ENCODE measurements at regions of chr11 and their contacts with region 1.

Region 1: DNA sequence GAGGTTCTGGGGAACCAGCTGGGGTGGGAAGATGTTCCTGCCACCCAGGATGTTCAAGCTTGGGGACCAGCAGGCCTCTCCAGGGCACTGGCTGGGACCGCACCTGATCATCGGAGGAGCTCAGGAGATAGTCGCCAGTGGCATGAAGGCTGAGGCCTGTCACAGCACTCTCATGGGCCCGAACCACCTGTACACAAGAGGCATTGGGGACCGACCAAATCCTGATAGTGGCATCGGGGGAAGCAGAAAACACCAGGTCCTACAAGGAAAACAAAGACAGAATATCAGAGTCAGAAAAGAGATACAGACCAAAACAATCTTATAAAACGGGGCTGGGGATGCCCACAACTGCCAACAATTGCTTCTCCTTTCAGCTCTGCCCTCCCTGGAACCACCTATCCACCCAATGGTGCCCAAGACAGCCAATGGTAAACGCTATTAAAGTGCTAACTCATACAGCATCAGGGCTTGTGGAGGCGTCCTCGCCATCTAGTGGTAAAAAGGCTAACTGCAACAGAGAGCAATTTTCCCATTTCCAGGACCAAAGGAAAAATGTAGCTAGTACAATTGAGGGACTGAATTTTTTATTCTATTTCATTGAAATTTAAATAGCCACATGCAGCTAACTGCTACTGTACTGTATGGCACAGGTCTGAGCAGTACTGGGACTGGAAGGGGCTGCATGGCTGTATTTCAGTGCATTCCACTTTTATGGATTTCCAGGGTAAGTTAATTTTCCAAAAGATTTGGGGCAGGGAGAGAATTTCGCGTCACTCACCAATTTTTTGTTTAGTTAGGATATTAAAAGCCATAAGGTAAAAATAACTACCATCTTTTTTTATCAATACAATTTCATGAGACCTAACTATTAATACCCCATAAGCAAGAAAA is 7.1 kb downstream of the PRPF19 start:
- DNase-seq: peak; percentile 53 to 61
- H3K4me3 ChIP-seq: no peak overlapping the region
- H3K27ac ChIP-seq: peak overlapping the region; percentile 12; the same call in 1 of the 2 replicates
- H3K4me1 ChIP-seq: peaks cover 5% of the 10 kb centered on the region
- H3K27me3 ChIP-seq: no peaks in the 10 kb centered on the region
- CTCF ChIP-seq: peak; percentile 98

Region 2: DNA sequence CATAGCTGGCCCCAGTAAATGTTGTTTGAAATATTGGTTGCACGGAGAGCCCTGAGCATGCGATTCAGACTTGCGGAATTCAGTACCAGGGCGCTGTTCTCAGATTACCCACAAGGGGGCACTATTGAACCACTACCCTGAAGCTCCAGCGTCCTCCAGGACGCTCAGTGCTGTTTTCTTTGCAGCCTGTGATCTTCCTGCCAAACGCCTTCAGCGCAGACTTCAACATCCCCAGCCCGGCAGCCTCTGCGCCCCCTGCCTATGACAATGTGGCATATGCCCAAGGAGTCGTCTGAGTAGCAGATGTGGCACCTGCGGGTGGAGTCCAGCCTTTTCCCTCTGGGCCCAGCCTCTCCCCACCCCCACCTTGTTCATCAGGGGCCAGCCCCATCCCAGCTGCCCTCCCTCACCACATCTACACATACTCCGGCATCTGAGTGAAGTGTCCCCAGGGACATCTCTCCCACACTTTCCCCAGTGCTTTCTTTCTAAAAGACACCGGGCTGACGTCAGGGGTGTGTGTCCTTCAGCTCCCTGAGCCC is 123.8 kb before region 1 on chr11:
- CTCF ChIA-PET with region 1: no interaction called
- POLR2A ChIA-PET with region 1: no interaction called
- intact Hi-C with region 1: loop called (anchors 1 kb)
- DNase-seq: peak; percentile 70 to 87
- H3K4me3 ChIP-seq: no peak overlapping the region
- H3K27ac ChIP-seq: no peak overlapping the region
- H3K4me1 ChIP-seq: no peaks in the 10 kb centered on the region
- H3K27me3 ChIP-seq: peaks cover 43% of the 10 kb centered on the region
- CTCF ChIP-seq: peak; percentile 90

Region 3: DNA sequence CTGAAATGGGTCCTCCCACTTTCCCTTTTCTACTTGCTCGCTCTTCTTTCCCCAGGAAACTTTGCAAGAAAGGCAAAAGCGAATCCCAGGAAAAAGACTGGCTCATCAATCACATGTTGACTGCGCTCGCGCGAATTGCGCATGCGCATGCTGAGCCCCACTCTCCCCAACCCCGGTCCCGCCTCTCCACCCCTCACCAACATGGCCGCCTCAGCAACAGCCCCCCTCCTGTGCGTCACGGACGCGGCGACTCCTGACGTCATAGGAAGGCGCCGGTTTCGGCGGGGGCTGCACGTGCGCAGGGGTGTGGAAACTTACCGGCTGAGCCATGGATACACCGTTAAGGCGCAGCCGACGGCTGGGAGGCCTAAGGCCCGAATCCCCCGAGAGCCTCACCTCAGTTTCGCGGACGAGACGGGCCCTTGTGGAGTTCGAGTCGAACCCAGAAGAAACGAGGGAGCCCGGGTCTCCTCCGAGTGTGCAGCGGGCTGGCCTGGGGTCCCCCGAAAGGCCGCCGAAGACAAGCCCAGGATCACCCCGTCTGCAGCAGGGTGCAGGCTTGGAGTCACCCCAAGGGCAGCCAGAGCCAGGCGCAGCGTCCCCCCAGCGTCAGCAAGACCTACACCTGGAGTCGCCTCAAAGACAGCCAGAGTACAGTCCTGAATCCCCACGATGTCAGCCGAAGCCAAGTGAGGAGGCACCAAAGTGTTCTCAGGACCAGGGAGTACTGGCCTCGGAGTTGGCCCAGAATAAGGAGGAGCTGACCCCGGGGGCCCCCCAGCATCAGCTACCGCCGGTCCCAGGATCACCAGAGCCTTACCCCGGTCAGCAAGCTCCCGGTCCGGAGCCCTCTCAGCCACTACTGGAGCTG is 57.3 kb before region 1 on chr11 and contains the start of gene CCDC86:
- CTCF ChIA-PET with region 1: interaction called, 14 read pairs
- POLR2A ChIA-PET with region 1: no interaction called
- intact Hi-C with region 1: no loop called
- DNase-seq: peak; percentile 83 to 96
- H3K4me3 ChIP-seq: peak within 1 kb of the TSS; percentile 91
- H3K27ac ChIP-seq: peak within 1 kb of the TSS; percentile 52
- H3K4me1 ChIP-seq: peaks cover 18% of the 10 kb centered on the region
- H3K27me3 ChIP-seq: no peaks in the 10 kb centered on the region
- CTCF ChIP-seq: no peak
- total RNA-seq, gene CCDC86: 34.8 and 35.6 TPM in 2 replicates

Region 4: GRCh38 chr11:60913793-60914632 is 14.7 kb after region 1 on chr11 and contains the start of gene TMEM109:
- CTCF ChIA-PET with region 1: interaction called, 10 read pairs
- POLR2A ChIA-PET with region 1: no interaction called
- intact Hi-C with region 1: no loop called
- DNase-seq: peak; percentile 81 to 88
- H3K4me3 ChIP-seq: peak within 1 kb of the TSS; percentile 78
- H3K27ac ChIP-seq: peak within 1 kb of the TSS; percentile 62
- H3K4me1 ChIP-seq: peaks cover 36% of the 10 kb centered on the region
- H3K27me3 ChIP-seq: peaks cover 20% of the 10 kb centered on the region; the same call in 1 of the 2 replicates
- CTCF ChIP-seq: no peak
- total RNA-seq, gene TMEM109: 104 and 105 TPM in 2 replicates

Region 5: GRCh38 chr11:61129639-61130523 is 230.6 kb after region 1 on chr11:
- CTCF ChIA-PET with region 1: no interaction called
- POLR2A ChIA-PET with region 1: no interaction called
- intact Hi-C with region 1: loop called (anchors 1 kb)
- DNase-seq: peak; percentile 85 to 93
- H3K4me3 ChIP-seq: peak overlapping the region; percentile 37; the same call in 1 of the 2 replicates
- H3K27ac ChIP-seq: peak overlapping the region; percentile 40
- H3K4me1 ChIP-seq: peaks cover 19% of the 10 kb centered on the region
- H3K27me3 ChIP-seq: no peaks in the 10 kb centered on the region
- CTCF ChIP-seq: peak; percentile 100

Region 6: DNA sequence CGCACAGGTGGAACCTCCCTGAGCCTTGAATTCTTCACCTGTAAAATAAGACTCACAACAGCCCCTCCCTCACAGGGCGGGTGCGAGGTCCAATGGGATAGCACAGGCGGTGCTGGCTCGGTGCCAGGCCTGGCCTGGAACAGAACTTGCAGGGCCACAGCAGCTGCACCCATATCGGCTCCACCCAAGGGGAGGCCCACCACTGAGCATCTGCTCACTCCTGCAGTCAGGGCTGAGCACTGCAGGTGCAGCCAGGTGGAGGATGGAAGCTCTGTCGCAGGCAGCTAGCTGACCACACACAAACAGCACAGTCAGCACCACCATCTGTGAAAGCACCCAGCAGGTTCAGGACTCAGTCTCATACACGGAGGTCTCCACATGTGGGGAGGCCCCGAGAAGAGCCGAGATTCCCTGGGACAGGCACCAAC is 242.3 kb after region 1 on chr11:
- CTCF ChIA-PET with region 1: no interaction called
- POLR2A ChIA-PET with region 1: no interaction called
- intact Hi-C with region 1: no loop called
- DNase-seq: peak in 1 of 2 experiments; percentile 62
- H3K4me3 ChIP-seq: no peak overlapping the region
- H3K27ac ChIP-seq: no peak overlapping the region
- H3K4me1 ChIP-seq: no peaks in the 10 kb centered on the region
- H3K27me3 ChIP-seq: no peaks in the 10 kb centered on the region
- CTCF ChIP-seq: no peak

Region 7: DNA sequence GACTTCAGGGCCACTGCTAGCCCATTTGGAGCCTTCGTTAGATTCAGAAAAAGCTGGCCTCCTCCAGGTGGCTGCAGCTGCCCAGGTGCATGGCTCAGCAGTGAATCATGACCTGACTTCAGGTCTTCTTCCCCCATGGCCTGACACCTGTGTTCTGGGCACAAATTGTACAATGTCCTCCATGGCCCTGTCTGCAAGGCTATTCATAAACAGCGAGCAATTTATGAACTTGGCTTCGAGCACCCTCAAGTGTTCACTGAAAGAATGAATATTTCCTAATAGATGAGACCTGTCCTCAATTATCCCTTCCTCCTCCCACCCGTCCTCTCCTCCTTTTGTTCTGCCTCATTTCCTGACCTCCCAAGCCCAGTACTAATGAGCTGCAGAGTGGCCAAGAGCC is 274.2 kb after region 1 on chr11:
- CTCF ChIA-PET with region 1: no interaction called
- POLR2A ChIA-PET with region 1: no interaction called
- intact Hi-C with region 1: loop called (anchors 5 kb)
- DNase-seq: peak; percentile 35 to 86
- H3K4me3 ChIP-seq: no peak overlapping the region
- H3K27ac ChIP-seq: no peak overlapping the region
- H3K4me1 ChIP-seq: no peaks in the 10 kb centered on the region
- H3K27me3 ChIP-seq: peaks cover 24% of the 10 kb centered on the region
- CTCF ChIP-seq: peak; percentile 66

Measured in PC-9 (cell line).